PC-9 (cell line): ENCODE measurements at regions of chr1 and their contacts with region 1.

Region 1: DNA sequence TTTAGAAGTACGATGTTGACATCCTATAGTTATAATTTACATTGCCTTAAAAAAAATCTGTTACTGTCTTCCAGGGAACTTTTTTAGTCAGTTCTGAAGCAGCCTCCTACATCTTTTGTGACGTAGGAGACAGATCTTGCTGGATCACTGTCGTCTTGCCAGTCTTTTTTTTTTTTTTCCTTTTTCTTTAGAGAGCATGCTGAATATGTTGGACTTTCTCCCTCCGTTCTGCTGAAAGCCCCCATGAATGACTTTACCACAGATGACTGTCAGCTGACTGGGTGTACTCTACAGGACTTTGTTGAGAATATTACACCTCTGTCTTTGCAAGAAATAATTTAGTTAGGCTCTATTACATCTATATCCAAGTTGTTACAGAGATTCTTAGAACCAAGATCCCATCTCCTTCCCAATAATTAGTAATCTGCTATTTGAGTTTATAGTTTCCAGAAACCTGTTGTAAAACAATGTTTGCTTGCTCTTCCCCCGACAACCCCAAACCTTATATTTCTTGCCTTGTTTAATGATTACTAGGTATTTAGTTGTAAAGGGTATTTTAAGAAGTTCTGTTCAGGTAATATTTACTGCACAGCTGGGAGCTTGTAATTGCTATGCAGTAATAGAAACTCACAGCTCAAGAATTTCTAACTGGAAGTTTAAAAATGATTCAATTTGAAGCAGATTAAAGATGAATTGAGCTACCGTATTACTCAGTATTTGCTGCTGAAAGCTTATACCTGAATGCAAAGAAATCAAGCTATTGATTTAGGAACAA is 61.8 kb downstream of the RASAL2 start:
- DNase-seq: no peak
- H3K4me3 ChIP-seq: no peak overlapping the region
- H3K27ac ChIP-seq: no peak overlapping the region
- H3K4me1 ChIP-seq: 0 out of 2 replicates have a peak, but pooled peaks cover 5% of the 10 kb centered on the region
- H3K27me3 ChIP-seq: no peaks in the 10 kb centered on the region
- CTCF ChIP-seq: no peak

Region 2: GRCh38 chr1:178134061-178134460 is 21.6 kb before region 1 on chr1:
- CTCF ChIA-PET with region 1: no interaction called
- POLR2A ChIA-PET with region 1: interaction called, 11 read pairs
- intact Hi-C with region 1: no loop called
- DNase-seq: no peak
- H3K4me3 ChIP-seq: no peak overlapping the region
- H3K27ac ChIP-seq: no peak overlapping the region
- H3K4me1 ChIP-seq: no peaks in the 10 kb centered on the region
- H3K27me3 ChIP-seq: no peaks in the 10 kb centered on the region
- CTCF ChIP-seq: no peak

Region 3: DNA sequence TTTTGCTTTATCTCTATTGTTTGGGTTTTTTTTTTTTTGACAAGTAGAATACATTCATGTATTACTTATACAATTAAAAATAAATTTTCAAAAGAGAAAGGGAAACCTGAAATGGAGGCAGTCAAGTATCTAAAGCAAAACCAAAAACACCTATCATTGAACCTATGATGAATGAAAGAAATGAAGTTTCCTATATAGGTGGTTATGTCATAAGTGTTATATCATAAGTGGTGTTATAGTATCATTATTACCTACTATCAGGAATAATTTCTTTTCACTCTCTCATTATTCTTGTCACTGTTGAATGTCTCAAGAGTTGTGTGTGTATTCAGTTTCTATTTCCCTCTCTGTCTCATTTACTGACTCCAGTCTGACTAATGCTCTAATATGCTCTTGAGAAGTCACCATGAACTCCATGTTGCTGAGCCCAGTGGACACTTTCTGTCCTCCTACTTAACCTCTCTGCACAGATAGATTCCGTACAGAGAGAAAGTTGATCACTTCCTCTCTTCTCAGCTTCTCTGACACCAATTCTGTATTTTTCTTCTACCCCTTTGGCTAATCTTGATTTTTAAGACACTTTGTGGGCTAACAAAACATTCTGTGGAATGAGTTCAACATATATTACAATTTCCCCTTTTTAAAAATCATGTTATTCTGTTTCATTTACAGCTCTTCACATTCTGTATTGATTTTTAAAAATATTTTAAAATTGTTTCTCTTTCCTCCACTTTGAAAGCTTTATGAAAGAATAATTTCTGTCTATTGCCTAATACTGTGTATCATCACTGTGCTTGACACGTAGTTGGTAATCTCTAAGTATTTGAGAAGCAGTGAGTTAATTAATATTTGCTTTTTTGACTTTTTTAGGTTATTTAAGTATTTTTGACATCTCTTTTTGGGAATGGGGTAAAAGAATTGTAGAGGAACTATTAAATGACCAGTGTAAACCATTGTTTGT is 11.7 kb before region 1 on chr1:
- CTCF ChIA-PET with region 1: no interaction called
- POLR2A ChIA-PET with region 1: interaction called, 11 read pairs
- intact Hi-C with region 1: no loop called
- DNase-seq: no peak
- H3K4me3 ChIP-seq: no peak overlapping the region
- H3K27ac ChIP-seq: no peak overlapping the region
- H3K4me1 ChIP-seq: no peaks in the 10 kb centered on the region
- H3K27me3 ChIP-seq: no peaks in the 10 kb centered on the region
- CTCF ChIP-seq: no peak